Posterior vena cava (tissue), 2 donors: ENCODE measurements at regions of chrX and their contacts with region 1.

Region 1: DNA sequence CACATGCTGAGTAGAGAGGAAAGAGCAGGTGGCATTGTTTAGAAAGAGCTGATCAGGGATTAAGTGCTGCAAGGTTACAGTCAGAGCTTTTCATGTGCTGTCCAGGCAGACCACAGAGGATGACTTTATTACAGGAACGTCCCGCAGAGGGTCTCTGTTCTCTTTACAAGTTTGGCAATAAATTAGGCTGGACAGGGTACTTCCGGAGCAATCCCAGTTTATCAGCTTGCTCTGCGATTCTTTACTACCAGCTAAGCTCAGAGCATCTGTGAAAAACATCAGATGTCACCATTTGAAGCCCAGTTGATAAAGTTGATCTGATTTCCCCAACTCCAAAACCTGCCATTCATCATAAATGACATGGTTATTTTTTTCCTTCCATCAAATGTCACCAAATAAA is 633.1 kb downstream of the NLGN4X start:
- DNase-seq: no peak

Region 2: DNA sequence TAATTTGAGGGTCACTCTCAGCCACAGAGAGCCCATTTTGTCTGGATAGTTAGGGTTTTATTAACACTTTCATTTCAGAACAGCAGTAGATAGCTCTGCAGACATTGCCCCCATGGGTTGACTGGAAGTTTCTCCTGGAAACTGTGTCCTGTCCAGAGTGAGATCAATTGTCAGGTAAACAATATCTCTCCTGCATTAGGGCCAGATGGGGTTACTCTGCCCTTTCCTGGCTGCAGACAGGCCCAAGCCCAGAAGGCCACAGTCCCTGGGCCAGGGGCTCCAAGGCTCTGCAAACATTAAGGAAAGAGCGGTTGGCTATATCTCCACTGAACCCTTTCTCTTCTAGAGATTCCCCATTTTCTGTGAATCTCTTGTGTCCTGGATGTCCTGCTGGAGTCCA is 1445.3 kb before region 1 on chrX:
- intact Hi-C with region 1: no loop called
- DNase-seq: no peak

Region 3: GRCh38 chrX:5314142-5314541 is 281.4 kb before region 1 on chrX:
- intact Hi-C with region 1: loop called in 1 of 2 experiments (anchors 5 kb)
- DNase-seq: no peak